ENCODE measurements at regions of chr13 and their contacts with region 1.

Region 1: GRCh38 chr13:101773062-101773461 is 320.6 kb downstream of the ITGBL1 start:
- DNase-seq: no peak
- H3K4me3 ChIP-seq: no peak overlapping the region
- CTCF ChIP-seq: no peak

Region 2: DNA sequence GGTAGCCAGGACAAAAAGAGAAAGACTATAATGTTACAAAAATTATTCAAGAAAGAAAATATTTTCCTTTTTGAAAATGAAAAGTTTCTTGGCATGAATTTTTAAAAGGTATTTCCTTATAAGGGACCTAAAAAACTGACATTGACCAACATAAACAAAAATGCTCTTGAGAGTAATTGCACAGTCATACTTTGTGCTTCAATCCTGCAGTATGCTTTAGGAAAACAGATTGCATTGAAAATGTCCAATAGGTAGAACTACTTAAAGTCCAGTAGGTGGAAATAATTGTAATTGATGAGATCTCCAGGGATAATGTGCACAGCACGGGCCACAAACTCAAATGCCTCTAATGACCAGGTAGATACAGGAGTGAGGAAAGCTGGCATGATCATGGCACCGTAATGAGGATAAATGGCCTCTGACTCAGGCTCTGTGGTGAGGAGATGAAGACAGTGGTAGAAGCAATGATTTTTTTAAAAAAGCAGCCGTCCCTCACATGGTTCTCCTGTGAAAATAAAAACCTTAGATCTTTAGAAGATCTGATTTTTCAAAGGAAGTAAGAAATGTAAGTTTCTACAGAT is 42.6 kb before region 1 on chr13:
- in situ Hi-C with region 1: no loop called
- DNase-seq: no peak
- H3K4me3 ChIP-seq: no peak overlapping the region
- CTCF ChIP-seq: no peak

Region 3: DNA sequence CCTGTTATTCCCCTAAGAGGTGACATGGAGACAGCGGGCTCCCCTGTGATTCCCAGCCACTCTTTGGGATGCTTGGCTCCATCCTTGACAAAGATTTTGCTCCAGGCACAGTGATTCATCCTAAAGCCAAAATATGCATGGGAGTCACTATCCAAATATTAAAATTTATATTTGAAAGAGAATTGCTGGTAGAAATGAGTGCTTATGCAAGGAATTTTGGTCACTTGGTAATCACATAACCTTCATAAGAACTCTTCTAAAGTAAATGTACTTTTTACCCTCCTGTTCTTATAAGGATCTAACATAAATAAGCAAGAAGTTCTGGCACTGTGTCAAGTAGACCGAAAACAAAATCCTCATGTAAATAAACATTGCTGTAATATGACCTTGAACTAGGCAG is 65.3 kb after region 1 on chr13:
- in situ Hi-C with region 1: loop called (anchors 10 kb)
- DNase-seq: peak; percentile 26
- H3K4me3 ChIP-seq: no peak overlapping the region
- CTCF ChIP-seq: no peak